ENCODE measurements at regions of chr1 and their contacts with region 1.

Region 1: GRCh38 chr1:85276215-85276977 is at the start of gene BCL10:
- DNase-seq: peak; percentile 97
- H3K4me3 Mint-ChIP-seq: peak within 1 kb of the TSS; percentile 80
- H3K27ac Mint-ChIP-seq: peak within 1 kb of the TSS; percentile 87
- H3K4me1 Mint-ChIP-seq: peaks cover 46% of the 10 kb centered on the region
- H3K27me3 Mint-ChIP-seq: no peaks in the 10 kb centered on the region
- total RNA-seq, gene BCL10: 13.8 to 17.7 TPM

Region 2: GRCh38 chr1:83776913-83777757 is 1499.3 kb before region 1 on chr1:
- CTCF ChIA-PET with region 1: no interaction called
- intact Hi-C with region 1: no loop called
- DNase-seq: no peak
- H3K4me3 Mint-ChIP-seq: no peak overlapping the region
- H3K27ac Mint-ChIP-seq: no peak overlapping the region
- H3K4me1 Mint-ChIP-seq: no peaks in the 10 kb centered on the region
- H3K27me3 Mint-ChIP-seq: no peaks in the 10 kb centered on the region

Region 3: DNA sequence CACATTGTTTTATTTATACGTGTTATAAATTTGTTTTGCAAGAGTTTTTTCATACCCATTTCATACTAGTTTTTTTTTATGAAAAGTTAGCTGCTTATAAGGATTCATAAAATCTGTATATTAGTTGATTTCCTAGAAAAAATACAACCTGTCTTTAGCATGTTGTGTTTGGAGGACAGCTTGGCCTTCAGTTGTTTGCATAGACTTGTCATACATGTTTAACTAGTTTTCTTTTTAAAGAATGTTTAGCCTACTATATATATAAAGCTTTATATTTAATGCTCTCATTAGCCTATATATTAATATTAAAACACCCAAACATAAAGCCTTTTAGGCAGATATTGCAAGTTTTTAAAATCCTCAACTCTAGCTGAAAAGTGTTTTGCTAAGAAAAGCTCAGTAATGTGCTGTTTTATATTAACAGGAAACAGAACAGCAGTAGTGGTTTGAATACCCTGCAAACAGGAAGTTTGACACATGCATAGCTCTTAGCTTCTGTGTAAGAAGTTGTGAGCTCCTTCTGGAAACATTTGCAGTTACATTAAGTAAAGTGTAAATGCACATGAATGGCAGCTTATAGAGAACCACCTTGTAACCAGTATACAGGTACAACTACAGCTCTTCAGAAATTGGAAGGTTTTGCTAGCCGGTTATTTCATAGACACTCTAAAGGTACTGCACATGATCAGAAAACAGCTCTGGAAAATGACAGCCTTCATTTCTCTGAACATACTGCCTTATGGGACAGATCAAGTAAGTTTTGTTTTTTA is 1132.4 kb before region 1 on chr1 and contains the start of gene PRKACB:
- CTCF ChIA-PET with region 1: no interaction called
- intact Hi-C with region 1: loop called (anchors 5 kb)
- DNase-seq: peak; percentile 21
- H3K4me3 Mint-ChIP-seq: peak within 1 kb of the TSS; percentile 89
- H3K27ac Mint-ChIP-seq: peak within 1 kb of the TSS; percentile 98
- H3K4me1 Mint-ChIP-seq: peaks cover 35% of the 10 kb centered on the region
- H3K27me3 Mint-ChIP-seq: no peaks in the 10 kb centered on the region
- total RNA-seq, gene PRKACB: 25.7 to 25.9 TPM

Region 4: GRCh38 chr1:84506002-84506728 is 770.2 kb before region 1 on chr1 and contains the starts of genes GNG5 and SPATA1:
- CTCF ChIA-PET with region 1: no interaction called
- intact Hi-C with region 1: loop called (anchors 1 kb)
- DNase-seq: peak; percentile 97
- H3K4me3 Mint-ChIP-seq: peak within 1 kb of the TSS; percentile 100
- H3K27ac Mint-ChIP-seq: peak within 1 kb of the TSS; percentile 98
- H3K4me1 Mint-ChIP-seq: peaks cover 27% of the 10 kb centered on the region
- H3K27me3 Mint-ChIP-seq: no peaks in the 10 kb centered on the region
- total RNA-seq, gene GNG5: 128 to 132 TPM
- total RNA-seq, gene SPATA1: 1.8 to 2.7 TPM

Region 5: DNA sequence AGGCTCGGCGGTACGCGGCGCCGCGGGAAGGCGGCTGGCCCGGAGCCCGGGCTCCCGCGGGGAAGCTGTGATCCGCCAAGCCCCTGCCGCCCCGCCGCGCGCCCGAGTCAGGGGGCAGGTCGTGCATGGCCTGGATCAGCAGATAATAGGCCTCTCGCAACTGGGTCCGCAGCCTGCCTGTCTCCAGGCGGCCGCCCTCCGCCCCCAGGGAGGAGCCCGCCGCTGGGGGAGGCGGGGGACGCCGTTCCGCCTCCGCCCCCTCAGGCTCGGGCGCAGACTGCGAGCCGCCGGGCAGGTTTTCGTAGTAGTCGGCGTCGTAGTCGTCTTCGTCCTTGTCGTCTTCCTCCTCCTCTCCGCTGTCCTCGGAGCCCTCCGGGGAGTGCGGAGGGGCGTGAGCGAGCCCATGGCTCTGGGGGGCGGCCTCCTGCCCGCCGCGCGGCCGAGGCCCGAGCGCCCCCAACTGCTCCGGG is 75.5 kb before region 1 on chr1 and contains the start of gene SYDE2:
- CTCF ChIA-PET with region 1: no interaction called
- intact Hi-C with region 1: loop called (anchors 1 kb)
- DNase-seq: peak; percentile 76
- H3K4me3 Mint-ChIP-seq: peak within 1 kb of the TSS; percentile 98
- H3K27ac Mint-ChIP-seq: peak within 1 kb of the TSS; percentile 89
- H3K4me1 Mint-ChIP-seq: peaks cover 33% of the 10 kb centered on the region
- H3K27me3 Mint-ChIP-seq: no peaks in the 10 kb centered on the region
- total RNA-seq, gene SYDE2: 4.4 to 5.1 TPM

Region 6: GRCh38 chr1:85576642-85577418 is 300.4 kb after region 1 on chr1:
- CTCF ChIA-PET with region 1: no interaction called
- intact Hi-C with region 1: loop called (anchors 1 kb)
- DNase-seq: peak; percentile 74
- H3K4me3 Mint-ChIP-seq: peak overlapping the region; percentile 63
- H3K27ac Mint-ChIP-seq: no peak overlapping the region
- H3K4me1 Mint-ChIP-seq: peaks cover 25% of the 10 kb centered on the region
- H3K27me3 Mint-ChIP-seq: peaks cover 74% of the 10 kb centered on the region

Region 7: GRCh38 chr1:86704458-86704971 is 1428.1 kb after region 1 on chr1 and contains the start of gene SH3GLB1:
- CTCF ChIA-PET with region 1: no interaction called
- intact Hi-C with region 1: loop called (anchors 10 kb)
- DNase-seq: peak; percentile 90
- H3K4me3 Mint-ChIP-seq: peak within 1 kb of the TSS; percentile 93
- H3K27ac Mint-ChIP-seq: peak within 1 kb of the TSS; percentile 98
- H3K4me1 Mint-ChIP-seq: peaks cover 40% of the 10 kb centered on the region
- H3K27me3 Mint-ChIP-seq: no peaks in the 10 kb centered on the region
- total RNA-seq, gene SH3GLB1: 45.0 to 45.5 TPM

Measured in activated naive CD4-positive, alpha-beta T cell treated with anti-CD3 and anti-CD28 coated beads for 36 hours (primary cell).